Posterior vena cava (tissue), 2 donors: ENCODE measurements at regions of chr19 and their contacts with region 1.

Region 1: DNA sequence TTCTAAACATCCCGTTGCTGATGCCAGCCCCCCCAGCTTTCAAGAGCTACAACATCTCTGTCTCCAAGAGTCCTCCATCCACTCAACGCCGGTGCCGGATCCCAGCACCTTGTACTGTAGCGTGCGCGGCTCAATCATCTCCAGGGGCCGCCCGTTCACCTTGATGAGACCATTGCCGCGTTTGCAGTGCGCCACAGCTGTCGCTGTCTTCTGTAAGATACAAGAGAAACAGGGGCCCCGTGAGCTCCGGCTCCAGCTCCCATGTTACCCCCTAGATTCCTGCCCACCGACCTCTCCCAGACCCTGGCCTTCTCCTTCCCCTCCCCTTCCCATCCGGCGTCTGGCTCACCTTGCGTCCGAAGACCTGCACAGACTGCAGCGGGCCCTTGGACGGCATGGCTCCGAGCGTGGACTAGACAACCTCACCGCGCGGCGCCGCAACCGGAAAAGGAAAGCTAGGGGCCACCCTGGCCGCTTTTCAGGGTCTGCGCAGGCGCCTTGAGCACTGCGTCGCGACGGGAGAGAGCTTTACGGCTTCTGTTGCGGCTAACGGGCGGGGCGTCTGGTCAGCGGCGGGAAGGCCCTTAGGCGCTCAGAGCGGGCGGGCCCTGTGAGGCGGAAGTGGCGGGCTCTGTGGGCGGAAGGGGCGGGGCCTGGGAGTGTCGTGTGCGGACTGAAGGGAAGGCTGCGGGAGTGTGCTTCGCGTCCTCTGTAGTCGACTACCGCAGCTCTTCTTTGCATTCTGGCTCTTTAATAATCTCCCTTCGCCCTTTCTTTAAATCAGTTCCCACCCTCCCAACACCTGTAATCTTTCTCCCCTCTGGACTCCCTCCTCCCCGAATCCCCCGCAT is at the start of gene RPS16:
- DNase-seq: peak; percentile 100
- total RNA-seq, gene RPS16: 1,159 to 1,295 TPM

Region 2: DNA sequence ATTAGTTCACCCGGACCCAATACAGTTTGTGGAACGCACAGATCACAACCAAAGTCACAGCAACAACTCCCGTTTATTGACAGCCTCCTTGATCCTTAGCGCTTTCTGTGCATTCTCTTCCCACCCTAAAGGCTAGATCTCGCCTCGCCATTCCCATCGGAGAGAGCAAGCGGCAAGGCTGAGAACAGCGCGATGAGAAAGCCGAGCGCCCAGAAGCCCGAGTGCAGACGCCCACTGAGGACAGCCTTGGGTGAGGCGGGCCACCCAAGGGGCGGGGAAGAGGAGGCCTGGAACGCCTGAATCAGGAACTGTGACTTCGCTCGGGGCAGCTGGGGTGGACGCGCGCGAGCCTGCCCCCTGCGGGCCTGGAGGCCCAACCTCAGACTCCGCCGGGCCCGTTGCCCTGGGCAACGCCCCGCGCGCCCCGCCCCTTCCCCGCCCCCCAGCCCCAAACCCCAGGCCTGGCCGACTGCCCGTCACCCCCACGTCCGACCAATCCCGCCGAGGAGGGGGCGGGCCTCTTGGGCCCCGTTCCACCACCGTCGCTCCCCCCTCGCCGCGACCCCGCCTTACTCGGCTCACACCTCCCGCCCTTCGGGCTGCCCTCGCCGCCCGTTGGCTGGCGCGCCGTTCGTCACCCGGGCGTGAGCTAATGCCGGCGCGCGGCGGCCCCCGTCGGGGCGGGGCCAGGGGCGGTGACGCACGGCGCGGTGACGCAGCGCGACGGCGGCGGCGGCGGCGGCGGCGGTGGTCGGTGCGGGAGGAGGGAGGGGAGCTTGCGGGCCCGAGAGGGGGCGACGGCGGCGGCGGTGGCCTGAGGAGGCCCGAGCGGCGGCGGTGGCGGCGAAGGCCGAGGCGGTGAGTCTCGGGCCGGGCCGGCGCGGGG is 93.8 kb before region 1 on chr19 and contains the start of gene SAMD4B:
- intact Hi-C with region 1: loop called in 1 of 2 experiments (anchors 10 kb)
- DNase-seq: peak; percentile 100
- total RNA-seq, gene SAMD4B: 74.5 to 119 TPM

Region 3: GRCh38 chr19:39397360-39398296 is 38.1 kb before region 1 on chr19:
- intact Hi-C with region 1: loop called in 1 of 2 experiments (anchors 5 kb)
- DNase-seq: peak; percentile 98

Region 4: GRCh38 chr19:39983695-39984305 is 548.1 kb after region 1 on chr19:
- intact Hi-C with region 1: no loop called
- DNase-seq: no peak